GM18951 (cell line): ENCODE measurements at regions of chr5 and their contacts with region 1.

Region 1: GRCh38 chr5:141585594-141585993 is 33.2 kb downstream of the DIAPH1 start:
- POLR2A ChIP-seq: no peak

Region 2: DNA sequence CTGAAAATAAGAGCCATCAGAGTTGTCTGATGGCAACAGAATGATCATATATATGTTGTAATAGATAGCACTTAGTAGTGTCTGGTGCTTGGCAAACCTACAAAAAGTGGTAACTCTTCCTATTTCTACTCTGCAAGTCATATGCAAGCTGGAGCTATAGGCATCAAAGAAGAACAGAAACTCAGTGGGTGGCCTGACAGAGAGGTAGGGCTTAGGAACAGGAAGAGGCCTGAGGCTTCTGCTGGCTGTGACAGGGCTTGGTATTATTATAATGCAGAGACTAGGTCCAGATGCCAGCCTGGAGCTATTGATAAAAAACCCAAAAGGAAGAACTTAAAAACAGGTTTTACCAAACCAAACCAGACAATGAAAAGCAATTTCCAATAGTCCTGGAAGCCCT is 37.6 kb after region 1 on chr5:
- in situ Hi-C with region 1: loop called (anchors 5 kb)
- POLR2A ChIP-seq: no peak